Panc1 (cell line): ENCODE measurements at regions of chr4 and their contacts with region 1.

Region 1: DNA sequence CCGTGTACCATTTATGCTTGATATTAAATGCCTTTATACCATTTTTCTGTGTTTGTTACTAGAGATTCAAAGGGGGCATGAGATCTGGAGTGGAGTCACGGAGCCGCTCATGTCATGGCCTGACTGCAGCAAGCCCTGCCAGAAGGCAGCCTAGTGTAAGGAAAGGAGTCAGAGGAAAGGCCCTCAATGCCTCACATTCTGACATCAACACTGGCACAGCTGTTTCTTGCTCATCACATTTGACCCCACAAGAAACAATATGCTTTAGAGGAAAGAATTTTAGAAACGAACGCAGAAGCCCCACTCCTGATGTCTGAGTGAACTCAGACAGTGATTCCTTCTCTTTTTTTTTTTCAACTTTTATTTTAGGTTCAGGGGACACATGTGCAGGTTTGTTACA is 322.4 kb upstream of the CPEB2 start:
- DNase-seq: no peak
- ATAC-seq: no peak
- H3K4me3 ChIP-seq: no peak overlapping the region
- H3K27ac ChIP-seq: no peak overlapping the region
- H3K4me1 ChIP-seq: no peaks in the 10 kb centered on the region
- H3K27me3 ChIP-seq: no peaks in the 10 kb centered on the region
- CTCF ChIP-seq: no peak

Region 2: GRCh38 chr4:13067077-13067476 is 1612.8 kb before region 1 on chr4:
- CTCF ChIA-PET with region 1: interaction called, 10 read pairs
- POLR2A ChIA-PET with region 1: no interaction called
- in situ Hi-C with region 1: no loop called
- intact Hi-C with region 1: no loop called
- DNase-seq: no peak
- ATAC-seq: no peak
- H3K4me3 ChIP-seq: no peak overlapping the region
- H3K27ac ChIP-seq: no peak overlapping the region
- H3K4me1 ChIP-seq: no peaks in the 10 kb centered on the region
- H3K27me3 ChIP-seq: no peaks in the 10 kb centered on the region
- CTCF ChIP-seq: no peak

Region 3: DNA sequence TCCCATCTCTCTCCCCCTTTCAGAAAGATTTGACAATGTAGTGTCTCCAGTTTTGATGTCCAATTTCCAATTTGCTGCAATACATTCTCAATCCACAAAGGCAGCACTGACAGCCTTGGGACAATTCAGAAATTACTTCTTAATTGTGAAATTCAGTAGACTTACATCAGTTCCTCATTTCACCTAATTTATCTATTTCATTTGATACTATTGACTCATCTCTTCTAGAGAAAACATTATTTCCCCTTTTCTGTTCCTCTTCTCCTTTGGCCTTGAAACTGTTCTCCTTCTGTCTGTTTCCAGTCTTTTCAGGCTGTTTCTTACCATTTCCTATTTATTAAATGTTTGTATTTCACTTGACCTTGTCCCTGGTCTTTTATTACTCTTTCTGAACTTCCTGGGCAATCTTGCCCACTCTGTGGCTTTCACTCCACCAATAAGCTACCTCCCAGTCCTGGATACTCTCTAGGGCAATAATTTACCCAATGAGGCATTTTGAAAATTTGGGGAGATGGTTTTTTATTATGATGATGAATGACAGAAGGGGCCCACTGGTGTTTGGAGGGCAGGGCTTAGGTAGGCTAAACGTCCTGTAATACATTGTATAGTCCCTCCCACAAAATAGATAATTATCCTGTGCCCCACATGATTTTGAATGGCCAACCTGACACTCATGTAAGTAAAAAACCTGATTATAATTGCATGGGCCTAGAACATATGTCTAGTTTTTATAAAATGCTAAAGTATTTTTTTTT is 554.4 kb before region 1 on chr4:
- CTCF ChIA-PET with region 1: no interaction called
- POLR2A ChIA-PET with region 1: no interaction called
- in situ Hi-C with region 1: no loop called
- intact Hi-C with region 1: no loop called
- DNase-seq: no peak
- ATAC-seq: no peak
- H3K4me3 ChIP-seq: no peak overlapping the region
- H3K27ac ChIP-seq: no peak overlapping the region
- H3K4me1 ChIP-seq: no peaks in the 10 kb centered on the region
- H3K27me3 ChIP-seq: no peaks in the 10 kb centered on the region
- CTCF ChIP-seq: no peak

Region 4: DNA sequence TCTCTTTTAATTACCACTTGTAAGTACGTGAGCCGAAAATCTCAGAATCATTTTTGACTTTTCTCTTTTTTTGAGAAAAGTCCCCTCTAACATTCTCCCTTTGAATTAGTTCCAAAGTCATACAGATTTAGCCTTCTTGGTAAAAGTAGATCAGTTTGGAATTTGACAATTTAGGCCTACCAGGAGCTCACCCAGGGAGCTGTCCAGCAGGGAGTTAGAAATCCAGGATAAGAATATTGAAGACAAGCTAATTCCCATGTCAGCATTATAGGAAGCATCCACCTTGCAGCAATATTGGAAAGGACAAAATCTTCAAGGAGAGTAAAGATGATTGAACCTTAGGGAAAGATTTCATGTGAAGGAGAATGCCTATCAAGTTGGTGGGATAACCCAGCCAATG is 29.8 kb before region 1 on chr4:
- CTCF ChIA-PET with region 1: no interaction called
- POLR2A ChIA-PET with region 1: no interaction called
- in situ Hi-C with region 1: no loop called
- intact Hi-C with region 1: no loop called
- DNase-seq: no peak
- ATAC-seq: no peak
- H3K4me3 ChIP-seq: no peak overlapping the region
- H3K27ac ChIP-seq: no peak overlapping the region
- H3K4me1 ChIP-seq: no peaks in the 10 kb centered on the region
- H3K27me3 ChIP-seq: no peaks in the 10 kb centered on the region
- CTCF ChIP-seq: no peak